ENCODE measurements at regions of chr7 and their contacts with region 1.

Region 1: GRCh38 chr7:39746103-39746819 is 122.9 kb downstream of the RALA start:
- DNase-seq: peak; percentile 73
- ATAC-seq: peak; percentile 57
- H3K4me3 Mint-ChIP-seq: no peak overlapping the region
- H3K27ac Mint-ChIP-seq: no peak overlapping the region
- H3K4me1 Mint-ChIP-seq: peaks cover 5% of the 10 kb centered on the region
- H3K27me3 Mint-ChIP-seq: no peaks in the 10 kb centered on the region

Region 2: GRCh38 chr7:39589323-39590111 is 156.7 kb before region 1 on chr7:
- CTCF ChIA-PET with region 1: interaction called, 12 read pairs
- POLR2A ChIA-PET with region 1: no interaction called
- DNase-seq: peak; percentile 84
- ATAC-seq: peak; percentile 87
- H3K4me3 Mint-ChIP-seq: peak overlapping the region; percentile 35
- H3K27ac Mint-ChIP-seq: peak overlapping the region; percentile 14
- H3K4me1 Mint-ChIP-seq: peaks cover 48% of the 10 kb centered on the region
- H3K27me3 Mint-ChIP-seq: no peaks in the 10 kb centered on the region

Region 3: DNA sequence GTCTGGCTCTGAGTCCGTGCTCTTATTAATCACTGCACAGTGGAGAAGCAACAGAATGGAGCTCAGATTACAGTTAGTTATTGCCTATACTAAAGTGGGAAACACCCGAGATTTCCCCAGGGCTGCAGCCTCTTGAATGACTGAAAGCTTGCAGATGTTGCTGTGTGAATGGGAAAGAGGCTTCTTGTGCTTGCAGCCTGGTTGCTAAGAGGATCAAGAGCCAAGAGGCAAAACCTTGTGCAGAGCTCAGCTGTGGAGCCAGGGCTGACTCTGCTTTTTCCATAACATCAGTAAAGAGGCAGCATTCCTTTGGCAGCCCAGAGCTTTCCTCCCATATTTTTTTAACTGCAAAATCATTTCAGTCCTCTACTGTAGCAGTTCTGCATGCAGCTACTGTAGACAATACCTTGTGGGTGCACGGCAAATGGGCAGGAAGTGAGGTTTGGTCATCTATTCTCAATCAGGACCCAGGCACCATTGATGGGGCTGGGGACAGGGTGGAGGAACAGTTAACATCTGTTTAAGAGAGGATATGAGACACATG is 36.4 kb before region 1 on chr7:
- CTCF ChIA-PET with region 1: interaction called, 12 read pairs
- POLR2A ChIA-PET with region 1: no interaction called
- DNase-seq: no peak
- ATAC-seq: no peak
- H3K4me3 Mint-ChIP-seq: no peak overlapping the region
- H3K27ac Mint-ChIP-seq: no peak overlapping the region
- H3K4me1 Mint-ChIP-seq: peaks cover 2% of the 10 kb centered on the region
- H3K27me3 Mint-ChIP-seq: peaks cover 6% of the 10 kb centered on the region

Region 4: GRCh38 chr7:39732837-39733804 is 13.1 kb before region 1 on chr7:
- CTCF ChIA-PET with region 1: interaction called, 52 read pairs
- POLR2A ChIA-PET with region 1: interaction called, 3 read pairs
- DNase-seq: peak; percentile 96
- ATAC-seq: peak; percentile 93
- H3K4me3 Mint-ChIP-seq: peak overlapping the region; percentile 85
- H3K27ac Mint-ChIP-seq: peak overlapping the region; percentile 97
- H3K4me1 Mint-ChIP-seq: peaks cover 47% of the 10 kb centered on the region
- H3K27me3 Mint-ChIP-seq: no peaks in the 10 kb centered on the region